Panc1 (cell line): ENCODE measurements at regions of chr5 and their contacts with region 1.

Region 1: GRCh38 chr5:13987843-13988464 is 43.5 kb upstream of the DNAH5 start:
- DNase-seq: peak; percentile 79
- ATAC-seq: peak; percentile 60
- H3K4me3 ChIP-seq: no peak overlapping the region
- H3K27ac ChIP-seq: peak overlapping the region; percentile 98
- H3K4me1 ChIP-seq: peaks cover 72% of the 10 kb centered on the region
- H3K27me3 ChIP-seq: no peaks in the 10 kb centered on the region
- CTCF ChIP-seq: peak; percentile 86

Region 2: GRCh38 chr5:13804336-13804735 is 183.6 kb before region 1 on chr5:
- CTCF ChIA-PET with region 1: no interaction called
- POLR2A ChIA-PET with region 1: no interaction called
- in situ Hi-C with region 1: no loop called
- intact Hi-C with region 1: no loop called
- DNase-seq: no peak
- ATAC-seq: no peak
- H3K4me3 ChIP-seq: no peak overlapping the region
- H3K27ac ChIP-seq: no peak overlapping the region
- H3K4me1 ChIP-seq: no peaks in the 10 kb centered on the region
- H3K27me3 ChIP-seq: no peaks in the 10 kb centered on the region
- CTCF ChIP-seq: no peak

Region 3: DNA sequence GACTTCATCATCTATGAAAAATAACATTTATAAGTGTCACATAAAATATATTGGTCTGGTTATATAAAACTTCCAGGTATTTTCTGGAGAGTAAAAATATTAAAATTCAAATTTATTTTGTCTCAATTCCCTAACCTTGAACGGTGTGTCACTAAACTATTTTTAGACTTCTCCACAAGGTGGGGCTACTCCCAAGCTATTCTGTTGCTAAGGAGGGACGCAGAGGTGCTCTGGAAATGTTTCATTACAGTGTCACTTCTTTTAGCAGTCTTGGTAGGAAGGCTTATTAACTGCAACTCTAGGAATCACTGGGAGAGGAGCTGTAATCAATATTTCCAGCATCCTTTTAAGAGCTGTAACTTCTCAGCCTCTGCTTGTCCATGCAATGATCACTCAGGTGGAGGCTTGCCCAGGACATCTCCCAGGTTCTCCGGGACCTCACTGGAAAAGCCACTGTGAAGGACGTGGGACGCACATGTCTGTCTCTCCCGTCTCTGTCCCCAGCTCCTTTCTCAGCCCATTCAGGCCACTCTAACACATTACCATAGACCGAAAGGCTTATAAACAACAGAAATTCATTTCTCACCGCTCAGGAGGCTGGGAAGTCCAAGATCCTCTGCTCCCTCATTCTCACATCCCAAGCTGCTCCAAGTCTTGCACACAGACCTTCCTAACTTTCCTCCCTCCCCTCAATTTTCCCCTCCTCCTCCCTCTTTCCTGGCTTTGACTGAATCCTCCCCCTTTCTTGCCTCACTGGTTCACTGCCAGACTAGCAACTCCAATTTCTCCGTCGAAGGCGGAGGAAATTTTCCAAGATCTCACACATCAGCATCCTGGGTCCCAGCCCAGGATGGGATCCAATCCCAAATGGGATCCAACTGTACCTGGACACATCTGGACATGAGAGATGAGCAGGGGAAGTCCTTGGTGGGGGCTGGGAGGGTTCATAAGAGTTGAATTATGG is 10.8 kb before region 1 on chr5:
- CTCF ChIA-PET with region 1: interaction called, 8 read pairs
- POLR2A ChIA-PET with region 1: interaction called, 15 read pairs
- in situ Hi-C with region 1: no loop called
- intact Hi-C with region 1: no loop called
- DNase-seq: no peak
- ATAC-seq: peak; percentile 92
- H3K4me3 ChIP-seq: no peak overlapping the region
- H3K27ac ChIP-seq: peak overlapping the region; percentile 79
- H3K4me1 ChIP-seq: peaks cover 18% of the 10 kb centered on the region
- H3K27me3 ChIP-seq: no peaks in the 10 kb centered on the region
- CTCF ChIP-seq: peak; percentile 75

Region 4: GRCh38 chr5:14270209-14270702 is 282.3 kb after region 1 on chr5:
- CTCF ChIA-PET with region 1: no interaction called
- POLR2A ChIA-PET with region 1: no interaction called
- in situ Hi-C with region 1: no loop called
- intact Hi-C with region 1: loop called (anchors 10 kb)
- DNase-seq: no peak
- ATAC-seq: peak; percentile 43; the same call in 1 of the 2 replicates
- H3K4me3 ChIP-seq: peak overlapping the region in 1 of 2 experiments; percentile 15; a peak in 2 of 4 replicates
- H3K27ac ChIP-seq: peak overlapping the region; percentile 96
- H3K4me1 ChIP-seq: peaks cover 96% of the 10 kb centered on the region
- H3K27me3 ChIP-seq: no peaks in the 10 kb centered on the region
- CTCF ChIP-seq: peak; percentile 87

Region 5: DNA sequence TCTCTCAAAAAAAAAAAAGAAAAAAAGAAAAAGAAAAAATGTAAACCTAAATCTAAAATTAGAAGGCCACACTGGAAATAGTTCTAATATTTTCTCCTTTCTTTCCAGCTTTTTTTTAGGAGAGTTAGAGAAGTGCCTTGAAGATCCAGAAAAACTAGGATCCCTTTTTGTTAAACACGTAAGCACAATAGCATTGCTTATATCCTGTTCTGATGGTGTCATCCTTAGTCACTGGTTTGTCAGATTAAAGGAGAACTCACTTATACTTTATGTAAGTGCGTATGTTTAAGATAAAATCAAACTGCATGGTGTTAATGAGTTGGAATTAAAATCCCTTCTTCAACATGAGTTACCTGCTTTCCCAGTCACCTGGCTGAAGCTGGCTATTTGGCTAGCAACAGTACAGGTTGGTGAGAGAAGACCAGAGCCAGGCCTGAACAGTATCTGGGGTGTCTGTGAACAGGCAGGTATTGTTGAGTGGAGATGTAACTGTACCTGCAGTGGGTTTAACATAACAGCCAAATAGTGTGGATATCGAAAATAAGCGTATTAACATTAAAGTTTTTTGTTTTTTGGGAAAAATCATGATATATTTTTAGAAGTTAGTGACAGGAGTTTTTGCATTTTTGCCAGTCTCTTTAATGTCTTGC is 489.0 kb after region 1 on chr5:
- CTCF ChIA-PET with region 1: no interaction called
- POLR2A ChIA-PET with region 1: no interaction called
- in situ Hi-C with region 1: no loop called
- intact Hi-C with region 1: no loop called
- DNase-seq: peak; percentile 39
- ATAC-seq: no peak
- H3K4me3 ChIP-seq: no peak overlapping the region
- H3K27ac ChIP-seq: no peak overlapping the region
- H3K4me1 ChIP-seq: no peaks in the 10 kb centered on the region
- H3K27me3 ChIP-seq: no peaks in the 10 kb centered on the region
- CTCF ChIP-seq: no peak